Activated CD4-positive, alpha-beta memory T cell treated with anti-CD3 and anti-CD28 coated beads, Interleukin-2, amount 10 ng/mL, durations not matched to agents 7 days and 5 days (primary cell): ENCODE measurements at regions of chr7 and their contacts with region 1.

Region 1: GRCh38 chr7:107661081-107661864 is 645 bp downstream of the SLC26A4 start:
- DNase-seq: peak; percentile 67
- H3K4me3 Mint-ChIP-seq: peak overlapping the region; percentile 94
- H3K27ac Mint-ChIP-seq: peak overlapping the region; percentile 89
- H3K4me1 Mint-ChIP-seq: peaks cover 55% of the 10 kb centered on the region
- H3K27me3 Mint-ChIP-seq: no peaks in the 10 kb centered on the region

Region 2: GRCh38 chr7:107563775-107564552 is 97.3 kb before region 1 on chr7 and contains the starts of genes COG5 and DUS4L:
- CTCF ChIA-PET with region 1: interaction called, 15 read pairs
- POLR2A ChIA-PET with region 1: interaction called, 31 read pairs
- DNase-seq: peak; percentile 88
- H3K4me3 Mint-ChIP-seq: peak within 1 kb of the TSS; percentile 74
- H3K27ac Mint-ChIP-seq: peak within 1 kb of the TSS; percentile 92
- H3K4me1 Mint-ChIP-seq: peaks cover 56% of the 10 kb centered on the region
- H3K27me3 Mint-ChIP-seq: no peaks in the 10 kb centered on the region
- total RNA-seq, gene COG5: 40.1 to 45.3 TPM
- total RNA-seq, gene DUS4L: 8.1 to 8.9 TPM

Region 3: GRCh38 chr7:107579885-107580715 is 81.2 kb before region 1 on chr7 and contains the start of gene BCAP29:
- CTCF ChIA-PET with region 1: interaction called, 8 read pairs
- POLR2A ChIA-PET with region 1: interaction called, 13 read pairs
- DNase-seq: peak; percentile 74
- H3K4me3 Mint-ChIP-seq: peak within 1 kb of the TSS; percentile 87
- H3K27ac Mint-ChIP-seq: peak within 1 kb of the TSS; percentile 82
- H3K4me1 Mint-ChIP-seq: peaks cover 32% of the 10 kb centered on the region
- H3K27me3 Mint-ChIP-seq: no peaks in the 10 kb centered on the region
- total RNA-seq, gene BCAP29: 49.1 to 52.5 TPM

Region 4: GRCh38 chr7:107628461-107629064 is 32.7 kb before region 1 on chr7:
- CTCF ChIA-PET with region 1: no interaction called
- POLR2A ChIA-PET with region 1: no interaction called
- DNase-seq: no peak
- H3K4me3 Mint-ChIP-seq: no peak overlapping the region
- H3K27ac Mint-ChIP-seq: peak overlapping the region; percentile 50
- H3K4me1 Mint-ChIP-seq: peaks cover 15% of the 10 kb centered on the region
- H3K27me3 Mint-ChIP-seq: no peaks in the 10 kb centered on the region

Region 5: DNA sequence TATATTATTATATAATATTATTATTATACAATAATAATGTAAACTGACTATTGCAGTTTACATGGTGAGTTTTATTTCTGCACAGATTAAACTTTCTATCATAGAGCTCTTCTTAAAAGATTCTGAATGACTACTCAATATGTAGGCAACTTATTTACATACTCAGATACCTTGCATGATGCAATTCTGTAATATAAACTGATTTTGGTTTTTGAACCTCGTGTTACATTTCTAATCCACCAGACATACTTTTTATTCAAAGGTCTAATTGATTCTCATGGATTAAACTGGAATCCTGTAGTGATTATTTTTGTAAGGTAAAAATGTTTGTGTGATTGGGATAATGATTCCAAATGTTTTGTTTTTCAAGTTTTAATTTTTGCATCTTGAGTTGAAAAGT is 19.2 kb after region 1 on chr7:
- CTCF ChIA-PET with region 1: interaction called, 11 read pairs
- POLR2A ChIA-PET with region 1: interaction called, 4 read pairs
- DNase-seq: no peak
- H3K4me3 Mint-ChIP-seq: no peak overlapping the region
- H3K27ac Mint-ChIP-seq: no peak overlapping the region
- H3K4me1 Mint-ChIP-seq: peaks cover 20% of the 10 kb centered on the region
- H3K27me3 Mint-ChIP-seq: no peaks in the 10 kb centered on the region